Pancreas (tissue), 10 donors: ENCODE measurements at regions of chr20 and their contacts with region 1.

Region 1: GRCh38 chr20:59751056-59751688 is 146.8 kb downstream of the PHACTR3 start:
- DNase-seq: peak; percentile 21 to 88 (median 60)
- ATAC-seq: peak; percentile 66 to 93 (median 88)
- H3K4me3 ChIP-seq: no peak overlapping the region
- H3K27ac ChIP-seq: no peak overlapping the region
- H3K4me1 ChIP-seq: no peaks in the 10 kb centered on the region
- H3K27me3 ChIP-seq: peaks cover 0 to 7% (median 0%) of the 10 kb centered on the region in 4 donors
- CTCF ChIP-seq: peak; percentile 43 to 62 (median 54)

Region 2: GRCh38 chr20:59605165-59606042 is 145.8 kb before region 1 on chr20:
- intact Hi-C with region 1: loop called in 2 of 3 experiments (anchors 5 to 10 kb)
- DNase-seq: no peak
- ATAC-seq: peak in 1 of 4 donors; percentile 42
- H3K4me3 ChIP-seq: peak overlapping the region in 2 of 4 donors; percentile 10
- H3K27ac ChIP-seq: no peak overlapping the region
- H3K4me1 ChIP-seq: no peaks in the 10 kb centered on the region
- H3K27me3 ChIP-seq: peaks cover 0 to 19% (median 0%) of the 10 kb centered on the region in 4 donors
- CTCF ChIP-seq: no peak